Colonic mucosa (tissue), 4 donors: ENCODE measurements at regions of chr15 and their contacts with region 1.

Region 1: GRCh38 chr15:60585743-60586708 is 107.1 kb upstream of the ICE2 start:
- DNase-seq: peak; percentile 72
- H3K4me3 ChIP-seq: no peak overlapping the region
- H3K27ac ChIP-seq: no peak overlapping the region
- H3K4me1 ChIP-seq: no peaks in the 10 kb centered on the region
- H3K27me3 ChIP-seq: no peaks in the 10 kb centered on the region
- CTCF ChIP-seq: peak; percentile 83

Region 2: GRCh38 chr15:60635507-60636352 is 49.7 kb after region 1 on chr15:
- intact Hi-C with region 1: no loop called
- DNase-seq: no peak
- H3K4me3 ChIP-seq: no peak overlapping the region
- H3K27ac ChIP-seq: no peak overlapping the region
- H3K4me1 ChIP-seq: no peaks in the 10 kb centered on the region
- H3K27me3 ChIP-seq: no peaks in the 10 kb centered on the region
- CTCF ChIP-seq: no peak

Region 3: DNA sequence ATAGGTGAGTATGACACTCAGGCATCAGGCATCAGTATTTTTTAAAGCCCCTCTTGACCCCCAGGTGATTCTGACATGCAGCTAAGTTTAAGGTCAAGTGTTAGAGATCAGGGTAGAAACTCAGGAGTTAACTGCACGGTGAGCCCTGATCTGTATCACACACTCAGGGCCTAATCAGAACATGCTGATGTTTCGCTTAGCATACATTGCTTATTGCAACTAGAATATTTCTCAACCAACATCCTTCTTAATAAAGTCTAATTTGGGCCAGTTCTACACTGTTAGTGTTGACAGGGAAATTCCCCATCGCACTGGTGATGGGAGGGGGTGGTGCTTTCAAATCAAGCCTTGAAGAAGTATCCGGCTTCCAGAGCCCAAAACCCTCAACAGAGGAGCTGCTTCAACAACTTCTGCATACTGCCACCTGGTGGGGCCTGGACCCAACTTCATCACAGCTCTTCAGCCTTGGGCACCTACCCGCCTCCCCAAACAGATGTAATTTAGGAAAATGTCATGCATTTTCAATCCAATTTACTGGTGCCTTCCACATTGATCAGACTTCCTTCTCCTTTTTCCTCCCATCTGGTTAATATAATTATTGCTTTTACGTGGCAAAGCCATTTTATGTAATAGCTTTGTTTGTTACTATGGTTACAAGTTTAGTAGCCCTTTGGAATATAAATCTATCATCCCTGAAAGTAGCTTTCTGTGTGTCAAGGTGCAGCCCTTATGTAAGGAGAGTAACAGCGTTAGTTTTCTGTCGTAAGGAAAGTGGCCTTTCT is 330.8 kb after region 1 on chr15:
- intact Hi-C with region 1: loop called (anchors 5 kb)
- DNase-seq: peak; percentile 84
- H3K4me3 ChIP-seq: no peak overlapping the region
- H3K27ac ChIP-seq: peak overlapping the region; percentile 50
- H3K4me1 ChIP-seq: no peaks in the 10 kb centered on the region
- H3K27me3 ChIP-seq: no peaks in the 10 kb centered on the region
- CTCF ChIP-seq: peak; percentile 82

Region 4: DNA sequence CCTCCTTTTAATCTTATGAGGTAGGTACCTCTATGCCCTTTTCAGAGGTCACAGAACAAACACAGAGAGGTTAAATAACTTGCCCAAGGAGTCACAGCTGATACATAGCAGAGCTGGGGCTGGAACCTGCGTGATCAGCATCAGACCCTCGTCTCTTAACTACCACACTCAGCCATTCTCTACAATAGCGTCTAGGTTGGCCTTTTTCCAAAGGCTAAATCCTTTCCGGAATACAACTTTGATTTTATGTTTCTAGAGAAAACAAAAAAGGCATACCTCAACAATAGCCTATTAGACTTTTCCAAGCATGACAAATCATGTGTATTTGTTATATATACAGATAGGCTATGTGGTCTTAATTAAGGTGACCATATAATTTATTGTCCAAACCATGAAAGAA is 455.9 kb after region 1 on chr15:
- intact Hi-C with region 1: loop called (anchors 5 kb)
- DNase-seq: no peak
- H3K4me3 ChIP-seq: no peak overlapping the region
- H3K27ac ChIP-seq: no peak overlapping the region
- H3K4me1 ChIP-seq: no peaks in the 10 kb centered on the region
- H3K27me3 ChIP-seq: no peaks in the 10 kb centered on the region
- CTCF ChIP-seq: no peak

Region 5: DNA sequence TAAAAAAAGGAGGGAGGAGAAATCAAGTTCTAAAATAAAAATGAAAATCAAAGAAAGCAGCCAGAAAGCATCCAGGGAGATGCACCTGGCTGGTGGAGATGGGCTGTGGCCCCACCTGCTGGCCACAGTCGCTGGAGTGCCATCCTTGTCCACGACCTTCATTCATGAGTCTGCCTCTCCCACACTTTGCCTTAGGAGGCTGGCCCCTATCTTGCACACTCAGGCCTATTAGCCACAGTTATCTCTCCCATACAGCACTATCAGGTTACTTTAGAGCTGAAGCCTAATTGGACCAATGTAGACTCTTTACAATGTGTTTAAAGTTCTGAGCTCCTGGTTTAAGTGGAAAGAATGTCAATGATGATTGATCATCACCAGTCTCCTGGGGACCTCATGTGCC is 1035.1 kb after region 1 on chr15:
- intact Hi-C with region 1: loop called (anchors 5 kb)
- DNase-seq: peak; percentile 20
- H3K4me3 ChIP-seq: no peak overlapping the region
- H3K27ac ChIP-seq: no peak overlapping the region
- H3K4me1 ChIP-seq: no peaks in the 10 kb centered on the region
- H3K27me3 ChIP-seq: no peaks in the 10 kb centered on the region
- CTCF ChIP-seq: no peak